ENCODE measurements at regions of chr16 and their contacts with region 1.

Region 1: DNA sequence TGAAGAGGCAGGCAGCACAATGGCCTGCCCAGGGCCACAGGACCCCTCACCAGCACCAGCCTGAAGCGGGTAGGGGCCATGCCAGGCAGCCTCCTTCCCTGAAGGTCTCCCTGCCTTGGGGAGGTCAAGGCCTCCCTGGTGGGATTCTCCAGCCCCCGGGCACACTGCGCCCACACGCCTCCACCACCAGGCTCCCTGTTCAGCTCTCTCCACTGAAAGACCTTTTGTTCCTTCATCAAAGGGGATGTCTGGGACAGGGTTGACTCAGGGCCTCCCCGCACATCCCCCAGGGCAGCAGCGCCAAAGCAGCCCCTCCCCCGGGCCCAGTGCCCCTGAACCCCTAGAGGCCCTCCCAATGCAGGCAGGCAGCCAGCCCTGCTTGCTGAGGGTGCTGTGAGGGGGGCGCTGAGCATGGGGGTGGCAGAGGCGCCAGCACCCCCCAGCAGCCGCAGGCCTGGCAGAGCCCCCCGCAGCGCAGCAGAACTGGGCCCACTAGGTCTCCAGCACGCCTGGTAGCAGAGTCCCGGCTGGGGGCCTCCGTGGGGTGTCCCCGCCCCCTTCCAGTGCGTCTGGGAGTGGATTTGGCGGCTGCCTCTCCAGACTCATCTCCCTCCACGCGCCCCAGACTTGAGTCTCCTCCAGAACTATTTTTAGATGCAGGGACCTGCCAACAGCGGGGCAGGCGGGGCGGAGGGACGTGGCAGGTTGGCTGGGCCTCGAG is 13.1 kb downstream of the BCAR1 start:
- DNase-seq: no peak
- ATAC-seq: no peak
- H3K4me3 ChIP-seq: no peak overlapping the region
- H3K27ac ChIP-seq: no peak overlapping the region
- H3K4me1 ChIP-seq: peaks cover 9% of the 10 kb centered on the region; the same call in 1 of the 2 replicates
- H3K27me3 ChIP-seq: no peaks in the 10 kb centered on the region
- CTCF ChIP-seq: no peak

Region 2: GRCh38 chr16:75160386-75160785 is 77.9 kb before region 1 on chr16:
- CTCF ChIA-PET with region 1: no interaction called
- POLR2A ChIA-PET with region 1: no interaction called
- intact Hi-C with region 1: no loop called
- DNase-seq: no peak
- ATAC-seq: no peak
- H3K4me3 ChIP-seq: no peak overlapping the region
- H3K27ac ChIP-seq: no peak overlapping the region
- H3K4me1 ChIP-seq: no peaks in the 10 kb centered on the region
- H3K27me3 ChIP-seq: no peaks in the 10 kb centered on the region
- CTCF ChIP-seq: no peak

Region 3: DNA sequence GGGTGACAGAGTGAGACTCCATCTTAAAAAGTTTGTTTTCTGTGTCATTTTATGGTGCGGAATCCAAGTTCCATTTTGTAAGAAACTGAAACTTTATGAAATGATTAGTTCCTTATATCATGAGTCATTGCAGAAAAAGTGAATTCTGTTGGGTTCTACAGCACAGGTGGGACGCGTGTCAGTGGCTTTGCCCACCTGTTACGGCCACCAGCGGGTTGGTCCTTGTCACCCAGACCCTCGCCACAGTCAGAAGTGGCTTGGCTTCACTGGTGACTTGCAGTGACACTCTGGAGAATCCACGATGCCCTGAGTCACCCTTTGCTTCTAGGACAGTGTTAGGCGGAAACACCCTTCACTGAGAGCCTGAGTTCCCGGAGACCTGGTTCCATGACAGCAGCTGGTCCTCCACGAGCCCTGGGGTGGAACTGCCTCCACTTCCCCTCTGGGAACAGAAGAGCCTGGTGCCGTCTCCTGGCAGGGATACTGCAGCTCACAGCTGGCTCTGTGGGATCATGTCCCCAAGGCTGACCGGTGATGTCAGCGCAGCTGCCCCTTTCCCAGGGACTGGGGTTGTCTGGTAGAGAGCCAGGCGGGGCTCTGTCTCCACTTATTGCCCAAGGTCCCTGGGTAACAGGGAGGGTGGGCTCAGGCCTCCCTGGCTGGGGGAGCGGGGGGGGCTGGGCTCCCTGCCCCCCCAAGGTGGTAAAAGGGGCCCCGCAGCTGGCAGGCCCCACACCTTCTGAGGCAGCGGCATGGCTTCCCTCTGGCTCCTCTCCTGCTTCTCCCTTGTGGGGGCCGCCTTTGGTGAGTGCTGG is 19.8 kb before region 1 on chr16 and contains the start of gene CTRB1:
- CTCF ChIA-PET with region 1: no interaction called
- POLR2A ChIA-PET with region 1: no interaction called
- intact Hi-C with region 1: no loop called
- DNase-seq: no peak
- ATAC-seq: no peak
- H3K4me3 ChIP-seq: no peak within 1 kb of the TSS
- H3K27ac ChIP-seq: no peak within 1 kb of the TSS
- H3K4me1 ChIP-seq: no peaks in the 10 kb centered on the region
- H3K27me3 ChIP-seq: no peaks in the 10 kb centered on the region
- CTCF ChIP-seq: no peak
- total RNA-seq, gene CTRB1: not detected in 2 replicates

Region 4: GRCh38 chr16:75296606-75297005 is 58.3 kb after region 1 on chr16:
- CTCF ChIA-PET with region 1: interaction called, 12 read pairs
- POLR2A ChIA-PET with region 1: no interaction called
- intact Hi-C with region 1: no loop called
- DNase-seq: no peak
- ATAC-seq: no peak
- H3K4me3 ChIP-seq: no peak overlapping the region
- H3K27ac ChIP-seq: no peak overlapping the region
- H3K4me1 ChIP-seq: no peaks in the 10 kb centered on the region
- H3K27me3 ChIP-seq: no peaks in the 10 kb centered on the region
- CTCF ChIP-seq: no peak

Measured in PC-3 (cell line).